Endothelial cell of umbilical vein (primary cell): ENCODE measurements at regions of chr10 and their contacts with region 1.

Region 1: GRCh38 chr10:72331601-72332422 is 22.9 kb downstream of the DNAJB12 start:
- DNase-seq: peak; percentile 86
- H3K4me3 ChIP-seq: no peak overlapping the region
- H3K27ac ChIP-seq: peak overlapping the region; percentile 75
- H3K4me1 ChIP-seq: peaks cover 58% of the 10 kb centered on the region
- H3K27me3 ChIP-seq: no peaks in the 10 kb centered on the region
- CTCF ChIP-seq: peak; percentile 20 to 59
- POLR2A ChIP-seq: no peak

Region 2: GRCh38 chr10:71974489-71975021 is 357.3 kb before region 1 on chr10:
- CTCF ChIA-PET with region 1: no interaction called
- POLR2A ChIA-PET with region 1: no interaction called
- dilution Hi-C with region 1: no loop called
- intact Hi-C with region 1: loop called (anchors 5 kb)
- DNase-seq: peak; percentile 45
- H3K4me3 ChIP-seq: no peak overlapping the region
- H3K27ac ChIP-seq: peak overlapping the region; percentile 16
- H3K4me1 ChIP-seq: peaks cover 44% of the 10 kb centered on the region
- H3K27me3 ChIP-seq: no peaks in the 10 kb centered on the region
- CTCF ChIP-seq: no peak
- POLR2A ChIP-seq: no peak

Region 3: DNA sequence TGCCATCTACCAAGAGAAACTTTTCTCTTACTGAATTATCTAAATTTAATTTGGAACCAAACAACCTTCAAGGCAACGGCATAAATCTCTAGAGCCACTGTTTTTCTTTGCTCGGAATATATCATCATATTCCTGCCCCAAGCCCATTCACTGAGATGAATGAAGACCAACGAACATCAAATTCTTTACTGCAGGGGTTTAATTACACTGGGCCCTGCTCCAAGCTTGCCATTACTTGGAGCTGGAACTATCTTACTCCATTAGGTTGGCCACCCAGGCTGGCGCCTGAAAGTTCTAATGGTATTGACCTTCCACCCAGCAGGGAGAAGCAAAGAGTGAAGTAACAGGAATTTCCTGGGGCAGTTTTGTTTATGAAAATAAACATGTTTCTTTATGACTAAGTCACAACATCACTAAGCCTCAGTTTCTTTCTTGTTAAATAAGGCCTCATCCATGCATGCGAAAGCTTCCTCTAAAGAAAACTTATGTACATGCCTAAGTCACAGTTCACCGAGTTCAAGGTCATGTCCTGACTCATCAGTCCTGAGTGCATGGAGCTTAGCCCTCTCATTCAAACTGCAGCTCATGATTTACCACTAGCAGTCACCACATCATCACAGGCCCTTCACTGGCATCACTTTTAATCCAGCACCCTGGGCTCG is 158.0 kb before region 1 on chr10:
- CTCF ChIA-PET with region 1: interaction called, 4 read pairs
- POLR2A ChIA-PET with region 1: no interaction called
- dilution Hi-C with region 1: no loop called
- intact Hi-C with region 1: loop called (anchors 5 kb)
- DNase-seq: no peak
- H3K4me3 ChIP-seq: no peak overlapping the region
- H3K27ac ChIP-seq: no peak overlapping the region
- H3K4me1 ChIP-seq: peaks cover 42% of the 10 kb centered on the region
- H3K27me3 ChIP-seq: no peaks in the 10 kb centered on the region
- CTCF ChIP-seq: no peak
- POLR2A ChIP-seq: no peak

Region 4: GRCh38 chr10:72223743-72224101 is 108.1 kb before region 1 on chr10:
- CTCF ChIA-PET with region 1: interaction called, 8 read pairs
- POLR2A ChIA-PET with region 1: interaction called, 3 read pairs
- dilution Hi-C with region 1: no loop called
- intact Hi-C with region 1: loop called (anchors 1 kb)
- DNase-seq: peak; percentile 59
- H3K4me3 ChIP-seq: no peak overlapping the region
- H3K27ac ChIP-seq: peak overlapping the region; percentile 67
- H3K4me1 ChIP-seq: peaks cover 11% of the 10 kb centered on the region
- H3K27me3 ChIP-seq: no peaks in the 10 kb centered on the region
- CTCF ChIP-seq: no peak
- POLR2A ChIP-seq: no peak

Region 5: GRCh38 chr10:72248468-72249151 is 83.2 kb before region 1 on chr10:
- CTCF ChIA-PET with region 1: interaction called, 8 read pairs
- POLR2A ChIA-PET with region 1: no interaction called
- dilution Hi-C with region 1: no loop called
- intact Hi-C with region 1: loop called (anchors 2 kb)
- DNase-seq: peak; percentile 91
- H3K4me3 ChIP-seq: no peak overlapping the region
- H3K27ac ChIP-seq: peak overlapping the region; percentile 89
- H3K4me1 ChIP-seq: peaks cover 39% of the 10 kb centered on the region
- H3K27me3 ChIP-seq: no peaks in the 10 kb centered on the region
- CTCF ChIP-seq: no peak
- POLR2A ChIP-seq: no peak

Region 6: DNA sequence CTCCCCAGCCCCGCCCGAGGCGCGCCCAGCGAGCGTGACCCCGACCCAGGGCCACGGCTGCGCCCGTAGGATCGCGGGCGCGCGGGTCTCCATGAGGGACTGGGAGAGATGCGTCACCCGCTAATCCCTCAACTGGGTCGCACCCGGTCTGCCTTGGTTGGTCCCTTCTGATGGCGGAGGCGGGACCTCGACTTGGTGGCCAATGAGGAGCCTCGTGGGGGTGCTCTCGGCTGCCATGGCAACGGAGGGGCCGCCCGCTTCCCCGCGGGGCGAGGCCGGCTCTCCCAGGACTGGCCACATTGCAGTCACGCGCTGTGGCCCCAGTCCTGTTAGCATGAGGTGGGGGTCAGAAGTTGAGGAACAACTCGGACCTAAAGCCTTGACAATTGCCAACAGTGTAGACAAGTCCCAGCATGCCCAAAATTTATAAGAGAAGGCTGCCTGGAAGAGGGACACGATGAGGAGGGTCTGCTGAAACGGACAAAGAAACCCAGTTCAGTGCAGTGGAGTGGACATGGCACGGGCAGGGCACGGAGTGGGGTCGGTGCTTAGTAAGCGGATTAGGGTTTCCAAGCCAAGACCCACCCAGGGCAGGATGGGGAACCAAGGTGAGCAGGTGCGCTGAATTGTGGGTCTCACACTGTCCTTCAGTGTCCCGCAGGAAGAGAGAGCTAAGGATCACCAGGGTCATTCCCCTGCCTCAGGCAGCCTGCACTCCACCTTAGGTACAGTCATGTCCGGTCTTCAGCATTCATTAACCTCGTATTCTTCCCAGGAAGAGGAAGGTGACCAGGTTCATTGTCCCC is 33.6 kb before region 1 on chr10:
- CTCF ChIA-PET with region 1: interaction called, 7 read pairs
- POLR2A ChIA-PET with region 1: interaction called, 4 read pairs
- dilution Hi-C with region 1: no loop called
- intact Hi-C with region 1: loop called (anchors 1 kb)
- DNase-seq: peak; percentile 97
- H3K4me3 ChIP-seq: peak overlapping the region in 2 of 3 experiments; percentile 34 to 44
- H3K27ac ChIP-seq: peak overlapping the region; percentile 88
- H3K4me1 ChIP-seq: peaks cover 15% of the 10 kb centered on the region
- H3K27me3 ChIP-seq: no peaks in the 10 kb centered on the region
- CTCF ChIP-seq: no peak
- POLR2A ChIP-seq: no peak